Common myeloid progenitor, CD34-positive (primary cell): ENCODE measurements at regions of chr3 and their contacts with region 1.

Region 1: DNA sequence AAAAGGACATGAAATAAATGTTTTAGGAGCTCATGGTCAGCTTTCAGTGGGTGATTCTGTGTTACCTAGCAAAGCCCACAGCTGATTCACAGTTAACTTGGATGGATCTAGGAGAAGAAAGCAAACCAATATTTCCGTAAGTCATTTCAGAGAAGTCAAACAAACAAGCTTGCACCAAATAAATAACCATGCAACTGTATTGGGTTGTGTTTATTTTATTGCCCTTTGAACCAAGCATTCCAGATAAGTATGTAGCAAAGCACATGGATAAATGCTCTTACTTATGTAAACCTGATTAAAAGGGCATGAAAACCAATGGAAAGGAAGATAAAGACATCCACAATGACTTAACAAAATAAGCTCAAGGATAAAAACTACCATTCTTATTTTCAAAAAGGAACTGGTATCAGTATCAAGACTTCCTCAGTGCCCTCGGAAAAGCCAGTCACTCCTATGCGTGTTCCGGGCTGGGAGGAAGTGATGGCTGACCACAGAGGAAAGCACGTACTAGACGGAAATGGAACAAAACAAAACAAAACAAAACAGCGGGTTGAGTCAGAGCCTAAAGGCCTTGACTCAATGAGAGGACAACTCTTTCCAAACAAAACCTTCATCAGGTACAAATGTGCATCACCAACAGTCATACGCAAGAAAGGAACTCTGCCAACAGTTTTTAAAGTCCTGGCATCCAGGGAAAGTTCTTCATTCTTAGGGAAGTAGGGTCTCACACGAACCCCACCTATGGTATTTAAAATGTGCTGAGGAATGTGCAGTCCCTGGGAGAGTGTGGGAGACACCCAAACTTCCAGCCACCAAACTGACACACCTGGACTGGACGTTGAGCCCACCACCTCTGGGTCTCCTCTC is 103.3 kb downstream of the SNRK start:
- DNase-seq: peak; percentile 97 to 98 (median 97)
- H3K4me3 ChIP-seq: peak overlapping the region in 4 of 7 experiments; percentile 16 to 43 (median 36)
- H3K27ac ChIP-seq: peak overlapping the region; percentile 81 to 88
- H3K4me1 ChIP-seq: peaks cover 30 to 69% (median 49%) of the 10 kb centered on the region in 4 experiments
- H3K27me3 ChIP-seq: no peaks in the 10 kb centered on the region

Region 2: GRCh38 chr3:43236008-43236407 is 153.6 kb before region 1 on chr3:
- CTCF ChIA-PET with region 1: no interaction called
- POLR2A ChIA-PET with region 1: no interaction called
- DNase-seq: no peak
- H3K4me3 ChIP-seq: no peak overlapping the region
- H3K27ac ChIP-seq: no peak overlapping the region
- H3K4me1 ChIP-seq: no peaks in the 10 kb centered on the region
- H3K27me3 ChIP-seq: no peaks in the 10 kb centered on the region

Region 3: GRCh38 chr3:43326891-43327581 is 62.6 kb before region 1 on chr3:
- CTCF ChIA-PET with region 1: no interaction called
- POLR2A ChIA-PET with region 1: no interaction called
- DNase-seq: peak; percentile 30 to 78 (median 57)
- H3K4me3 ChIP-seq: peak overlapping the region in 2 of 7 experiments; percentile 7
- H3K27ac ChIP-seq: peak overlapping the region in 1 of 2 experiments; percentile 36
- H3K4me1 ChIP-seq: peaks cover 14 to 42% (median 30%) of the 10 kb centered on the region in 4 experiments
- H3K27me3 ChIP-seq: no peaks in the 10 kb centered on the region

Region 4: GRCh38 chr3:43378066-43378935 is 11.3 kb before region 1 on chr3:
- CTCF ChIA-PET with region 1: interaction called, 15 read pairs
- POLR2A ChIA-PET with region 1: no interaction called
- DNase-seq: peak; percentile 51 to 61 (median 59)
- H3K4me3 ChIP-seq: no peak overlapping the region
- H3K27ac ChIP-seq: no peak overlapping the region
- H3K4me1 ChIP-seq: peaks cover 0 to 4% (median under 1%) of the 10 kb centered on the region in 4 experiments
- H3K27me3 ChIP-seq: no peaks in the 10 kb centered on the region

Region 5: DNA sequence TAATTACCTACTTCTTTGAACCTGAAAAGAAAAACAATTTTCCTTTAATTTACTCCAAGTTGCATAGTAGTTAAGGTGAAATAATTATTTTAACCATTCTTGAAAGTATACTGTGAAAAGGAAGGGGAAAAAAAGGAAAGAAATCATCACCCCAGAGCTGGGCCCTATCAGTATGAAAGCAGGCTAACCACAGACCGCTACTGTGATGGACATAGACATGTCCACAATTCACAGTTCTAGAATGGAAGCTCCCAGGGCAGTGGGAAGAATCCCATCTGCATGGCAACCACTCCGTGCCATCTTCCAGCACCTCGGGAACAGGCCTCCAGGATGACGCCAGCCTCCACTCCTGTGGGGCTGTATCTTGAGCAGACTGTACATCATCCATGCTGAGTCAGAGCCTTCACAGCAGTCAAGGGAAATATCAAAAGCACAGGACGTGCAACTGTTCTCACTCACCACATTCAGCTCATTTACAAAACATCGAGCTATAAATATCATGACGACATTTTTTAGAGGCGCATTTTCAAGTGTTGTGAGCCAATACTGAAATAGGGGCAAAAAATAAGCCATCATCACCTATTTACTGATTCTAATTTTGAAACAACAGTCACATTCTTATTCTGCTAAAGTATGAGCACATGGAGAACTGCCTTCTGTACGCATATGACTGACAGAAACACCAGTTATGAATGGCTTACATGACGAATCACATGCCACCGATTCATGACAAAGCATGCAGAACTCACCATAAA is 16.4 kb after region 1 on chr3:
- CTCF ChIA-PET with region 1: interaction called, 13 read pairs
- POLR2A ChIA-PET with region 1: interaction called, 10 read pairs
- DNase-seq: peak; percentile 75 to 94 (median 90)
- H3K4me3 ChIP-seq: peak overlapping the region in 3 of 7 experiments; percentile 23 to 48 (median 46)
- H3K27ac ChIP-seq: peak overlapping the region; percentile 59 to 66
- H3K4me1 ChIP-seq: peaks cover 6 to 26% (median 23%) of the 10 kb centered on the region in 4 experiments
- H3K27me3 ChIP-seq: no peaks in the 10 kb centered on the region